OCI-LY7 (cell line): ENCODE measurements at regions of chr13 and their contacts with region 1.

Region 1: DNA sequence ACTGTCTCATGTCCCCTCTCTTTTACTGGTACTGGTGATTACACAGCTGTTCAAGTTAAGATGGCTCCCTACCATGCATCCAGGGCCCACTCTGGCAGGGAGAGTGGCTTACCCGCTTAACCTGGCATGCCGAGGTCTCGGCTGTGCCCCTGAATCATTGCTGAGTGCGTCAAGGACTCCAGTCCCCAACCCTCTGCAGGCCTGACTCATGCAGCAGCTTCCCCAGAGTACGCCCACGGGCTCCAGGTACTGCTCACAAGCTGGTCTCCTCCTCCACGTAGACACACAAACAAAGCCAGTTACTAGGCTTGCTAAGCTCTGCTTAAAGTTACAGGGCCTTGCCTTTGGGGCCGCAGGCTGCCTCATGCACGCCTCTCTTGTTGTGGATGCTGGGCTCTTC is 447.4 kb downstream of the COG6 start:
- DNase-seq: no peak
- H3K4me3 ChIP-seq: no peak overlapping the region
- H3K27ac ChIP-seq: no peak overlapping the region
- H3K4me1 ChIP-seq: peaks cover 22% of the 10 kb centered on the region
- CTCF ChIP-seq: no peak

Region 2: DNA sequence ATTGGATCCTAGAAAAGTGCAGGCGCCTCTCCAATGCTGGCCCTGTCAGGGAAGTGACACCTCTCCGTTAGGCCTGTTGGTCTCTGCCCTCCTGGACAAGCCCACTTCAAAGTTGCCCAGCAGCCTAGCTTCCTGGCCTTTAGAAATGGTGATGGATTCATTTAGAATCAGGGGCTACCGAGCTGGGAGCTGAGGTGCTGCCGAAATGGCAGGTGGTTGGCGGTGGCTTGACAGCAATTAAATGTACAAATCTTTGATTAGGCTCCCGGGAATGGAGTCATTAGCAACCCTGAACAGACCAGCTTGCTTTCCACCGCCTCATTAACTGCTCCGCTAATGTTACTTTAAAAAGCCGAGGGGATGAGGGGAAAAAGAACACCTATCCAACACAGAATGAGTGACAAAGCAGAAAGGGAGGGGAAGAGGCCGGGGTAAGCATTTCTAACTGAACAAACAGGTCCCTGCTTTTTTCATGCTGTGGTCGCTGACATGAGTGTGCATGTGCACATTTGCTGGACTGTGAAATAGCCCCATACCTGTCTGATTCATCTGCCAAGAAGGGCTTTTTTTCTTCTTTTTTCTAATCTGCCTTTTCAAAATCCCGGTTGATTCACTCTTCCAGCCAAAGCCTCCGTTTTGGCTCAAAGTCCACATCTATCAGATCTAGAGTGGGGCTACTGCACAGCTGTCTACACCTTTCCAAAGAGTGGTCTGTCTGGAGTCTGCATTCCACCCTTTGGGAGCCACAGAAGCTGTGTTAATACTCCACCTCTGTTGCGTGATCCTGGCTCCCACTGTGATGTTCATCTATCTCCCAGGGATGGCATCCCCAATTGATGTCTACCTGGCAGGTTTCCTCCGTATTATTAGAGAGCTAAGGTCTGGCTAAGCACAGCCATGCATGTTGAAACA is 15.5 kb before region 1 on chr13:
- CTCF ChIA-PET with region 1: no interaction called
- POLR2A ChIA-PET with region 1: interaction called, 16 read pairs
- intact Hi-C with region 1: no loop called
- DNase-seq: no peak
- H3K4me3 ChIP-seq: no peak overlapping the region
- H3K27ac ChIP-seq: no peak overlapping the region
- H3K4me1 ChIP-seq: no peaks in the 10 kb centered on the region
- CTCF ChIP-seq: no peak